CD4-positive, alpha-beta memory T cell (primary cell): ENCODE measurements at regions of chr17 and their contacts with region 1.

Region 1: DNA sequence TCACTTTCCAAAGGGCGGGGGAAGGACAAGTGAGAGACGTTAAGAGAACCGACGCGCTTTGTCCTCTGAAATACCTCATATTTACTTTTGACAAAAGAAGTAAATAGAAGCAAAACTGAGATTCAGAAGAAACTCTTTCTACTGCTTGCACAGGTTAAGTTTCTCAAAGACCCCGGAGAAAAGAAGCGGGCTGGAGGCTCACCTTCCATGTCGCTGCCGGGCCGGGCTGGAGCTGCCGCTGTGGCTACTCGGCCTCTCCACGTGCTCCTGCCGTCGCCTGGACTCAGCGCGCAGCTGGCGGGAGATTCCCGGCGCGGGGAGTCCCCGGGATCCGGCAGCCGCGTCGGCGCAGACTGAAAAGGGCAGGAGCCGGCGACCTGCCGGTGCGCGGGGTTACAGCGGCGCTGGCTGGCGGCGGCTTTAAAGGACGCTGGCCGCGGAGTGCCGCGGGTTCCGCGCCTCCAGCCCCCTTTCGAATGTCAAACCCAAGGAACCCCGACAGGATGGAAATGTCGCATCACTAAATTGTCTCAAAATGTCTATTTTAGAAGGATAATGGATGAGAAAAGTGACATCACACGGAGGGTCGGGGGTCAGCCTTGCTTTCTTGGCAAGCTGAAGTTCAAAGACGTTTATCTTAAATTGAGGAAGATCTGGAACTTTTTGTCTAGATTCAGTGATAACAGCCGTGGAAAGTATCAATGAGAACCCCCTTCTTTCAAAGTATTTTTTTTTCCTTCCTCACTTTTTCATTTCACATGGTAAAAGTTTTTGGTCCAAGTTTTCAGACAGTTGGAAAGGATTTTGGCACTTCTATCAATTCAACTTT is at the start of gene IKZF3:
- DNase-seq: peak; percentile 82 to 90 (median 83)
- H3K4me3 ChIP-seq: peak within 1 kb of the TSS; percentile 55 to 80
- H3K4me3 Mint-ChIP-seq: peak within 1 kb of the TSS; percentile 91 to 97 (median 94)
- H3K27ac ChIP-seq: peak within 1 kb of the TSS; percentile 93
- H3K27ac Mint-ChIP-seq: peak within 1 kb of the TSS; percentile 94 to 99 (median 96)
- H3K4me1 ChIP-seq: peaks cover 68% of the 10 kb centered on the region
- H3K4me1 Mint-ChIP-seq: peaks cover 52 to 93% (median 67%) of the 10 kb centered on the region in 4 donors
- H3K27me3 ChIP-seq: no peaks in the 10 kb centered on the region
- H3K27me3 Mint-ChIP-seq: no peaks in the 10 kb centered on the region
- total RNA-seq, gene IKZF3: 116 to 118 TPM

Region 2: GRCh38 chr17:39636927-39637736 is 227.0 kb before region 1 on chr17 and contains the start of gene STARD3:
- CTCF ChIA-PET with region 1: no interaction called
- POLR2A ChIA-PET with region 1: no interaction called
- intact Hi-C with region 1: loop called (anchors 5 kb)
- DNase-seq: peak; percentile 85 to 92 (median 87)
- H3K4me3 ChIP-seq: peak within 1 kb of the TSS; percentile 86 to 88
- H3K4me3 Mint-ChIP-seq: peak within 1 kb of the TSS; percentile 92 to 98 (median 96)
- H3K27ac ChIP-seq: peak within 1 kb of the TSS; percentile 97
- H3K27ac Mint-ChIP-seq: peak within 1 kb of the TSS; percentile 84 to 98 (median 96)
- H3K4me1 ChIP-seq: peaks cover 61% of the 10 kb centered on the region
- H3K4me1 Mint-ChIP-seq: peaks cover 33 to 62% (median 49%) of the 10 kb centered on the region in 4 donors
- H3K27me3 ChIP-seq: no peaks in the 10 kb centered on the region
- H3K27me3 Mint-ChIP-seq: peaks cover 0 to 1% of the 10 kb centered on the region in 2 donors
- total RNA-seq, gene STARD3: 105 to 110 TPM

Region 3: DNA sequence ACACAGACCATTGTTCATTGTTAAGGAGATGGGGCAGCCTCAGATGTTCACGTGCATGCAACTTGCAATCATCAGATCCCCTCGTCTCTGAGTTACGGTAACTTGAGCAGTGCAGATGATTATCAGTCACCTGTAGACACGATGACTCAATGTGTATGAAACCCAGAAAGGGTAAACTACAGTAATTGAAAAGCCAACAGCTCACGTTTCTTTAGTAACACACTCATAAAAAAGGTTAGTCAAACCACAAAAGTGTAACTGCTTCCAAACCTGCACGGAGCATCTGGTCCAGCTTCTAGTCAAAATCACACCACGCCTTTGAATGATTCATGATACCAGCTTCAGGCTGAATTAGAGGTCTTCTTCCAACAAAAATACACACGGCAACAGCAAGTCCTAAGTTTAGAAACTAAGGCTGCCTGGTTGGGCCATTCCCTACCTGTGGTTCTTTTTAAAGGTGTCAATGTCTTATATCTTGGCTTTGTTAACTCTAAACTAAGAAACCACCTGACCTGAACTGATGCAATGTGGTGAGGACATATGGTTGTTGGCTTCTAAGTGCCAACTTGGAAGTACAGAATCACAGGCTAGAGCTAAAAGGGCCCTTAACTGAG is 94.1 kb before region 1 on chr17:
- CTCF ChIA-PET with region 1: interaction called, 3 read pairs
- POLR2A ChIA-PET with region 1: interaction called, 54 read pairs
- intact Hi-C with region 1: loop called (anchors 1 kb)
- DNase-seq: peak; percentile 67 to 92 (median 72)
- H3K4me3 ChIP-seq: peak overlapping the region in 1 of 2 donors; percentile 6
- H3K4me3 Mint-ChIP-seq: peak overlapping the region; percentile 33 to 96 (median 66)
- H3K27ac ChIP-seq: peak overlapping the region; percentile 77
- H3K27ac Mint-ChIP-seq: peak overlapping the region; percentile 88 to 98 (median 95)
- H3K4me1 ChIP-seq: peaks cover 100% of the 10 kb centered on the region
- H3K4me1 Mint-ChIP-seq: peaks cover 81 to 100% (median 89%) of the 10 kb centered on the region in 4 donors
- H3K27me3 ChIP-seq: no peaks in the 10 kb centered on the region
- H3K27me3 Mint-ChIP-seq: no peaks in the 10 kb centered on the region

Region 4: GRCh38 chr17:39794249-39794970 is 69.7 kb before region 1 on chr17:
- CTCF ChIA-PET with region 1: interaction called, 5 read pairs
- POLR2A ChIA-PET with region 1: interaction called, 30 read pairs
- intact Hi-C with region 1: loop called (anchors 5 kb)
- DNase-seq: peak; percentile 50 to 67 (median 58)
- H3K4me3 ChIP-seq: no peak overlapping the region
- H3K4me3 Mint-ChIP-seq: peak overlapping the region in 7 of 8 donors; percentile 40 to 82 (median 73)
- H3K27ac ChIP-seq: peak overlapping the region; percentile 54
- H3K27ac Mint-ChIP-seq: peak overlapping the region; percentile 83 to 97 (median 91)
- H3K4me1 ChIP-seq: peaks cover 75% of the 10 kb centered on the region
- H3K4me1 Mint-ChIP-seq: peaks cover 56 to 85% (median 70%) of the 10 kb centered on the region in 4 donors
- H3K27me3 ChIP-seq: no peaks in the 10 kb centered on the region
- H3K27me3 Mint-ChIP-seq: no peaks in the 10 kb centered on the region

Region 5: GRCh38 chr17:39822051-39822451 is 42.1 kb before region 1 on chr17:
- CTCF ChIA-PET with region 1: interaction called, 23 read pairs
- POLR2A ChIA-PET with region 1: interaction called, 31 read pairs
- intact Hi-C with region 1: loop called (anchors 1 kb)
- DNase-seq: peak in 1 of 5 donors; percentile 44
- H3K4me3 ChIP-seq: no peak overlapping the region
- H3K4me3 Mint-ChIP-seq: no peak overlapping the region
- H3K27ac ChIP-seq: peak overlapping the region; percentile 66
- H3K27ac Mint-ChIP-seq: peak overlapping the region; percentile 81 to 98 (median 94)
- H3K4me1 ChIP-seq: peaks cover 51% of the 10 kb centered on the region
- H3K4me1 Mint-ChIP-seq: peaks cover 36 to 61% (median 45%) of the 10 kb centered on the region in 4 donors
- H3K27me3 ChIP-seq: no peaks in the 10 kb centered on the region
- H3K27me3 Mint-ChIP-seq: no peaks in the 10 kb centered on the region

Region 6: GRCh38 chr17:39903158-39903884 is 39.2 kb after region 1 on chr17:
- CTCF ChIA-PET with region 1: no interaction called
- POLR2A ChIA-PET with region 1: no interaction called
- intact Hi-C with region 1: no loop called
- DNase-seq: no peak
- H3K4me3 ChIP-seq: no peak overlapping the region
- H3K4me3 Mint-ChIP-seq: peak overlapping the region in 4 of 8 donors; percentile 43 to 71 (median 60)
- H3K27ac ChIP-seq: no peak overlapping the region
- H3K27ac Mint-ChIP-seq: peak overlapping the region in 6 of 7 donors; percentile 24 to 81 (median 50)
- H3K4me1 ChIP-seq: peaks cover 23% of the 10 kb centered on the region
- H3K4me1 Mint-ChIP-seq: peaks cover 10 to 24% (median 17%) of the 10 kb centered on the region in 4 donors
- H3K27me3 ChIP-seq: no peaks in the 10 kb centered on the region
- H3K27me3 Mint-ChIP-seq: no peaks in the 10 kb centered on the region